ENCODE measurements at regions of chr5 and their contacts with region 1.

Region 1: DNA sequence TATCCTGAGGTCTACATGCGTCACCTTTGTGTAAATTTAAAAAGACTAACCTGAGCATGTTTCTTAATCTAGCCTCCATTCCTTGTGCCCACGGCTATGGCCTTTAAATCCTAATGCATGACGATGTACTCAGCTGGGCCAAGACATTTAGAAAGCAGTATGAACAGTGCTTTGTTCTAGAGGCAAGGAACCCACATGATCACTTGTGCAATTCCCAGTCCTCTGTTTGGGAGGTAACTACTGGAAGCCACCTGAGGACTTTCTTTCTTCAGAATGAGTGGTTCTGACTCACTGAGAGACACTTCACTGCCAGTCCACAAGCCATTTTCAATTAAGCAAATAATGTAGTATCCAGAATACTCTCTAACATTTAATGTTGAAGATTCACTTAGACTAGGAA is 181.3 kb downstream of the RAB3C start:
- DNase-seq: no peak
- H3K4me3 Mint-ChIP-seq: no peak overlapping the region
- H3K27ac Mint-ChIP-seq: no peak overlapping the region
- H3K4me1 Mint-ChIP-seq: peaks cover 25% of the 10 kb centered on the region
- H3K27me3 Mint-ChIP-seq: no peaks in the 10 kb centered on the region

Region 2: DNA sequence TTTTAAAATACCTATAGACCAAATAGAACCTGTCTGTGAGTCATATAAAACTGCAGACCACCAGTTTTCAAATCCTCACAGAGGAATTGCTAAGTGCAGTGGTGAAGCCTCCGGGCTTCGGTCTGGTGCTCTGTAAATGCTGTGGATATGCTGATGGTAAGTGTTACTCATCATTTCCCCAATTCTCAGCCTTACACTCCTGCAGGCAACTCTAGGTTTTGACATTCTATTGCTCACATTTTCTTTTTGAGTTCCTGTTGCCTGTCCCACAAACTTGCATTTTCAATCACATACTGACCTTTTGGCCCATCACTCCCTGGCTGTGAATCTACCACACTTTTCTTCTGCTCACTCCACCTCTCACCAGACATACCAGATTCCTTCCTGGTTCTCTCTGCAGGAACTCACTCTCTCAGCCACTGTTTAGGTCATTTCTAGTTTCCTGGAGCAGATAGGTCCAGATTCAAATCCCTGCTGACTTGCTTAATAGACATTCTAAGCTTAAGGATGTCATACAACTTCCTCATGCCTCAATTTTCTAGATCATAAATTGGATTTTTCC is 11.6 kb after region 1 on chr5:
- intact Hi-C with region 1: loop called (anchors 1 kb)
- DNase-seq: no peak
- H3K4me3 Mint-ChIP-seq: no peak overlapping the region
- H3K27ac Mint-ChIP-seq: no peak overlapping the region
- H3K4me1 Mint-ChIP-seq: peaks cover 12% of the 10 kb centered on the region
- H3K27me3 Mint-ChIP-seq: peaks cover 3% of the 10 kb centered on the region

Region 3: GRCh38 chr5:58794875-58795274 is 30.7 kb after region 1 on chr5:
- intact Hi-C with region 1: loop called (anchors 2 kb)
- DNase-seq: no peak
- H3K4me3 Mint-ChIP-seq: no peak overlapping the region
- H3K27ac Mint-ChIP-seq: no peak overlapping the region
- H3K4me1 Mint-ChIP-seq: peaks cover 4% of the 10 kb centered on the region
- H3K27me3 Mint-ChIP-seq: peaks cover 5% of the 10 kb centered on the region

Region 4: GRCh38 chr5:58849921-58850667 is 85.9 kb after region 1 on chr5:
- intact Hi-C with region 1: no loop called
- DNase-seq: no peak
- H3K4me3 Mint-ChIP-seq: no peak overlapping the region
- H3K27ac Mint-ChIP-seq: no peak overlapping the region
- H3K4me1 Mint-ChIP-seq: no peaks in the 10 kb centered on the region
- H3K27me3 Mint-ChIP-seq: peaks cover 11% of the 10 kb centered on the region